Pancreas (tissue), 10 donors: ENCODE measurements at regions of chr4 and their contacts with region 1.

Region 1: DNA sequence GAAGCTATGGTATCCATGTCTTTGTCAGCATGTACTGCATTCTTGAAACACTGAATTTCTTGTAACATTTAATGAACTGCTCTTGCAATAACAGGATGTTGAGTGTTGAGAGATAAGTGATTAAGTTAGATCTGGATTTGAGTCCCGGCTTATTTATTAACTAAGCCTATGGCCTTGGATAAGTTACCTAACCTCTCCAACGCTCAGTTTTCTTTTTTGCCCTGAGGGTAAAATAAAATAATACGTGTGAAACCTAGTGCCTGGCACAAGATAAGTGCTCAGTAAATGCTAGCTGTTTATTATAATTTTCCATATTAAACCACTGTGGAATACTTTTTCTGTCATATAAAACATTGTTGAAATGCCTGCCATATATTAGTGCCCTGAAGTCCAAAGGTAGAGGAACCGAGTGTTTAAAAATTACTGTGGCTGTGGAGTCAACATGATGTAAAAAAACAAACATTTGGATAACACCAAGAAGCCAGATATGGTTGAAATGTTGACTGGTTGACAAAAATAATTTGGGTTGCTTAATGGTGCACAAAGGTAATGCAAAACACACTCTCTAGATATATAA is 58.6 kb upstream of the ALB start:
- DNase-seq: no peak
- ATAC-seq: peak; percentile 84 to 89 (median 86)
- H3K4me3 ChIP-seq: peak overlapping the region in 1 of 4 donors; percentile 7
- H3K27ac ChIP-seq: peak overlapping the region in 2 of 4 donors; percentile 35 to 75
- H3K4me1 ChIP-seq: peaks cover 8 to 30% (median 13%) of the 10 kb centered on the region in 3 donors
- H3K27me3 ChIP-seq: no peaks in the 10 kb centered on the region
- CTCF ChIP-seq: no peak

Region 2: DNA sequence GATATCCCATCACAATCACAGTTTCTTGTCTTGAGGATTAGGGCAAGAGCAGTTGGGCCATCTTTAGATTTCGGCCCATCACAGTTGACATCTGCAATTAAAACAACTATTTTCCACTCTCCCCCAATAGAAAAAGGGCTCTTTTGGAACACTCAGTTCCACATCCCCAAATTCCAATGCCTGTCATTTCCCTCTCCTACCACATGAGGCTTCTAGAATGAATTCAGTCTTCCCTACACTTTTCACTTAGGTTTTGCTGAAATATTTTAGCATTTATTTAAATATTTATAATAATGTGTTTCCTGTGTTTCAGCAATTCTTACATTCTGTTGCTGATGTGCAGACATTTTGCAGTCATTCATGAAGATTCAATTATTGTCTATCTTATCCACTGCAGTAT is 394.3 kb before region 1 on chr4:
- intact Hi-C with region 1: no loop called
- DNase-seq: no peak
- ATAC-seq: no peak
- H3K4me3 ChIP-seq: no peak overlapping the region
- H3K27ac ChIP-seq: no peak overlapping the region
- H3K4me1 ChIP-seq: no peaks in the 10 kb centered on the region
- H3K27me3 ChIP-seq: no peaks in the 10 kb centered on the region
- CTCF ChIP-seq: no peak

Region 3: DNA sequence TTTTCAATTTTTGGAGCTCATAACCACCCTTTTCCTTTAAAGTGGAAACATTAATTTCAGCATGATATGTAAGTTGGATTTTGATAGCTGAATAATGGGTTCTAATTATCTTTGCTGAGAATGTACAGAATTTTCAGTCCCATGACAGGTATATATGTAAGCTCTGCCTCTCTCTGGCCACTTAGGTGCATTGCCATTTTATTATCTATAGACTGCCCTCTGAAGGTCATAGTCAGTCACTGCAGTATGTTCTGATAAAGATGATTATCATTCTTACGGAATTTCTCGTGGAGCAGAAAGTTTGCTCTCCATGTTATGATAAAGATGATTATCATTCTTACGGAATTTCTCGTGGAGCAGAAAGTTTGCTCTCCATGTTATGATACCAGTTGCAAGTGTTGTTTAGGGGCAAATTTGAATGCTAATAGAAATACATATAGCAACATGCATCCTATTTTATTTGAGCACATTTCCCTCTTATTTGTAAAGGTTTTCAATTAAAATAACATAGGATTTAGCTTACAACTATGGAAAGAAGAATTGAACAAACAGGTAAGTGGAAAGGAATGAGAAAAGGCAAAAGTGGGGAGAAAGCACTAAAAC is 101.0 kb after region 1 on chr4:
- intact Hi-C with region 1: loop called in 1 of 3 experiments (anchors 10 kb)
- DNase-seq: peak in 3 of 6 donors; percentile 10 to 26 (median 23)
- ATAC-seq: peak; percentile 77 to 97 (median 96)
- H3K4me3 ChIP-seq: no peak overlapping the region
- H3K27ac ChIP-seq: no peak overlapping the region
- H3K4me1 ChIP-seq: peaks cover 6 to 10% (median 7%) of the 10 kb centered on the region in 3 donors
- H3K27me3 ChIP-seq: no peaks in the 10 kb centered on the region
- CTCF ChIP-seq: peak; percentile 6 to 87 (median 74)

Region 4: GRCh38 chr4:73589261-73589847 is 243.9 kb after region 1 on chr4:
- intact Hi-C with region 1: no loop called
- DNase-seq: no peak
- ATAC-seq: peak; percentile 65 to 78 (median 74)
- H3K4me3 ChIP-seq: peak overlapping the region in 1 of 4 donors; percentile 1
- H3K27ac ChIP-seq: peak overlapping the region in 3 of 4 donors; percentile 51 to 88 (median 77)
- H3K4me1 ChIP-seq: peaks cover 28 to 43% (median 33%) of the 10 kb centered on the region in 3 donors
- H3K27me3 ChIP-seq: no peaks in the 10 kb centered on the region
- CTCF ChIP-seq: no peak